ENCODE measurements at regions of chr2 and their contacts with region 1.

Region 1: DNA sequence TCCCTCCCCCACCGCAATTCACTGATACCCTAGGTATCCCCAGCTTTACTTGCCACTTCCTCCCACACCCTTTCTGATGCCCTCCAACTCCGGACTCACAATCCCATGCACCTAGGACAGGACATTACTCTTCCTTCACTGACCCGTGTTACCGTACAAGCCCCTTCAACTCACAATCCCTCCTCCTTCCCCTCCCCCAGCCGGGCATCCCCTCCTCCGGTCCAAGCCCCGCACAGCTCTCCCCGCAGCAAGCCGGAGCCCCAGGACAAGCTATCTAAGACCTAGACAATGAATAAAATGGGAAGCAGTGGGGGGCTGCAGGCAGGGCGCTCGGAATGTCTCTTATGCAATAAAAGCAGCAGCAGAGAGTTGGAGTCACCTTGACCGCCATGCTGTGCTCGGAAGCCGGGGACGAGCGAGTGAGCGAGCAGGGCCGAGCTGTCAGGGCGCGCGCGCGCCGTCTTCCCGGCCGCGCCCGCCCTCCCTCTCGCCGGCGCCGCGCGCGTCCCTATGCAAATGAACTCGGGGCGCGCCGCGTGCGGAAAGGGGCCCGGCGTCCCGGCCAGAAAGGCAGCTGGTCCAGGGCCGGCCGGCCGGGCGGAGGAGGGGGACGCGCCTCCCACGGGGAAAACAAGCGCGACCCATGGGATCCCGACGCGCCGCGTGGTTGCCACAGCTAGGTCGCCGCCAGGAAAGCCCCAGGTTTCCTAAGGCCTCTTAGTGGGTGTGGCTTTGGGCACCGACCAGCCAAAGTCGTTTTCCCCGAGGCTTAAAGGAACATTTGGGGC is at the start of gene SLC25A12:
- DNase-seq: peak; percentile 71
- H3K4me3 Mint-ChIP-seq: peak within 1 kb of the TSS; percentile 98
- H3K27ac Mint-ChIP-seq: peak within 1 kb of the TSS; percentile 90
- H3K4me1 Mint-ChIP-seq: peaks cover 57% of the 10 kb centered on the region
- H3K27me3 Mint-ChIP-seq: peaks cover 7% of the 10 kb centered on the region
- total RNA-seq, gene SLC25A12: 34.6 and 35.0 TPM in 2 replicates

Region 2: DNA sequence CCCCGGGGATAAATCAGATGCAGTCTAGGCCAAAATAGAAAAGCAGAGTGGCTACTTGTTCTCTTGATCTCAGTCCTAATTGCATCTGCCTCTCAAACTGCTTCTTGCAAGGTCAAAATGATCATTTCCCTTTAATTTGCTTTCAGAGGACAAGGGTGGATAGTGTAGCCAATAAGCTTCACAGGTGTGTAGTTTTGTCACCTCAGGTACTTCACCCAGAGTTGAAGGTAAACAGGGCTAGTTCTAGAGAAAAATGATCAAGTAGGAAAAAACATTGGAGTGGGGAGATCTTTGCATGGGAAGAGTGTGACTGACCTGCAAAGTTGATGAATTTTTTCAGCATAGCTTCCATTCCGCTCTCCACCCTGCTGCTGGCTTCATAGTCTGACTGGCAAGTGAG is 1115.1 kb before region 1 on chr2:
- intact Hi-C with region 1: no loop called
- DNase-seq: no peak
- H3K4me3 Mint-ChIP-seq: no peak overlapping the region
- H3K27ac Mint-ChIP-seq: no peak overlapping the region
- H3K4me1 Mint-ChIP-seq: no peaks in the 10 kb centered on the region
- H3K27me3 Mint-ChIP-seq: peaks cover 52% of the 10 kb centered on the region

Region 3: DNA sequence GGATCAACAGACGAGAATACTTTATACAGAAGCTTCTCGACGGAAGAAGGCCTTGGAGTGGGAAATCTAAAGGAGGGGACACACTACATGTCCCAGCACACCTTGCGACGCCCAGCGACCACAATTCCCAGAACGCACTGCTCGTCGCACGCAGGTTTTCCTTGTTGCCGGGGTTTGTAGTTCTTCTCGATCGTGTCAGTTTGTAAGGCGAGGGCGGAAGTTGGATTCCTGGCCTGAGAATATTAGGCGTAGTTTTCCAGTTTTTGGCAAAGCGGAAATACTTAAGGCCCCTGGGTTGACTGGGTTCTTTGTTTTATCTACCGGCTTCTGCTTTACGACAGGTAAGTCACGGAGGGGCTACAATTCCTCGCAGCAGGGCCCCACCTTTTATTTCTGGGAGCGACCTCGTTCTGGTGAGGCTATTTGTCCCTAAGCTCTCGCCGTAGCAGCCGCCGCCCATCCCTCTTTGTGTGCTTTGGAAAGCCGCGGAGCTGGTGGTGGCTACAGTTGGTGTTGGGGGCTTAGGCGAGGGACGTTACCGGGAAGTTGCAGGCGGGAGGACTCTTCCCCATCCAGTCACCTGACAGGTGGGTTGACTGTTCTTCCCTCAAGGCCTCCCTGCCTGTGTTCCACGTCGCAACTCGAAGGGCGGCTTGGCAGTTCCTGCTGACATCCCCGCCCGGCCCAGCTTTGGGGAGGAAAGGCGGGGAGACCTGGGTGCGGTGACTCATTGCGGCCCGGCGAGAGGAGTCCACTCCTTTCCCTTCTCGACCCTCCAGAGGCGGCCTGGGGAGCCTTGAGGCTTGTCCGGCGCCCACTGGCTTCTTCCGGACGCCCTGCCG is 206.5 kb before region 1 on chr2 and contains the start of gene DYNC1I2:
- intact Hi-C with region 1: loop called (anchors 1 kb)
- DNase-seq: peak; percentile 63
- H3K4me3 Mint-ChIP-seq: peak within 1 kb of the TSS; percentile 85
- H3K27ac Mint-ChIP-seq: peak within 1 kb of the TSS; percentile 84
- H3K4me1 Mint-ChIP-seq: peaks cover 20% of the 10 kb centered on the region
- H3K27me3 Mint-ChIP-seq: peaks cover 10% of the 10 kb centered on the region
- total RNA-seq, gene DYNC1I2: 49.3 and 49.4 TPM in 2 replicates

Region 4: GRCh38 chr2:171798252-171798741 is 95.7 kb before region 1 on chr2:
- intact Hi-C with region 1: loop called (anchors 5 kb)
- DNase-seq: no peak
- H3K4me3 Mint-ChIP-seq: no peak overlapping the region
- H3K27ac Mint-ChIP-seq: peak overlapping the region; percentile 52
- H3K4me1 Mint-ChIP-seq: peaks cover 25% of the 10 kb centered on the region
- H3K27me3 Mint-ChIP-seq: no peaks in the 10 kb centered on the region

Region 5: DNA sequence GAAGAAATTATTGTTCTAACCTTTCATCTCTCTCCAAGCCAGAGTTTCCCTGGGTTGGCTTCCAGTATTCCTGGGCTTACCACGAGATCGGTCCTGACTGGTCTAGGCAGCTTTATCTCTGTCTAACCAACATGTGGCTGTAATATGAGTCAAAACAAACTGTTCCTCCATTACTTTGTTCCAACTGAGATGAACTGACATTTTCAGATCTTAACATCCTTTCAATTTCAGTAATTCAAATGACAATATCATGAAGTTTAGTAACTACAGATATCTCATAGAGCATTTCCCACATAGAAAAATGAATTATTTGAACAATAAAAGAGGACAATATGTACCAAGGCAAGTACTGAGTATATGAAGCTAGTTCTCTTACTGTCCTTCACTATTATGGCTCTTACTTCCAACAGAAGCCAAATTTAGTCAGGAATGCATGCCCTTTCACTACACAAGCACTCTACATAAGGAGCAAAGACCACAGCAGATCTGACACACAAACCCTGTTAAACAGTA is 15.5 kb before region 1 on chr2:
- intact Hi-C with region 1: loop called (anchors 1 kb)
- DNase-seq: no peak
- H3K4me3 Mint-ChIP-seq: no peak overlapping the region
- H3K27ac Mint-ChIP-seq: peak overlapping the region; percentile 32
- H3K4me1 Mint-ChIP-seq: peaks cover 43% of the 10 kb centered on the region
- H3K27me3 Mint-ChIP-seq: no peaks in the 10 kb centered on the region

Region 6: GRCh38 chr2:171910494-171910893 is 16.5 kb after region 1 on chr2:
- intact Hi-C with region 1: loop called (anchors 2 kb)
- DNase-seq: no peak
- H3K4me3 Mint-ChIP-seq: no peak overlapping the region
- H3K27ac Mint-ChIP-seq: no peak overlapping the region
- H3K4me1 Mint-ChIP-seq: no peaks in the 10 kb centered on the region
- H3K27me3 Mint-ChIP-seq: peaks cover 10% of the 10 kb centered on the region

Region 7: DNA sequence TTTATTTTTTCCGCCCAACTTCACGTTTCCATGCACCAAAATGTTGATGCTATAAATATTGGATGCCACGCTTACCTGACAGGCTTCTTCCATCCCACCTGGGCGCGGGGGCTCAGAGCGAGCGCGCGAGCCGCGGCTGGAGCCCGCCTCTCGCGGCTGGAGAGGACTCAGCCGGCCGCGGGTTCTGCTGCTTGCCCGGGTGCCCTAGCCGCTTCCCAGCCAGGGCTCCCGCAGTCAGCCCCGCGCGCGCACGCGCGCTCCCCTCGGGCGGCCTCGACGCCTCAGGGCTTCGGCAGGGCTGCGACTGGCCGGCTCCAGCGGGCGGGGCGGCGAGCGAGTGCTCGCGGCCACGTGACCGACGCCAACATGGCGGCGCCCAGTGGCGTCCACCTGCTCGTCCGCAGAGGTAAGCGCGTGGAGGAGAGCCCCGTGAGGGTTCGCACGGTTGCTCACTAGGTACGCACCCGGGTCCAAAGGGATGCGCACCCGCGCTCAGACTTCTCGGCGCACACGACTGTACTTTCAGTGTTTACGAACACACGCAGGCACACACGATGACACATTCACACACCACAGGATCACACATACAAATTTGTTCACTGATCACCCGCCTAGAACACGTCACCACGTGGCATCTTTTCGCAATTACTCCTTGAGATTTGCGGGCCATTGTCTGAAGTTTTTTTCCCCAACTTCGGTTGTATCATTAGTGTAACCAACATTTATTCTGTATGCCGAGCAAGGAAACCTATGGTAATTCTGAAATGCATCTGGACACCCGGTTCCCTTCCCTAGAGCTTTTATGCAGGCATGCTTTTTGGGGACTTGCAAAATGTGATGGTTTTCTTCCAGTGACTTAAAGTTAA is 105.8 kb after region 1 on chr2 and contains the start of gene METAP1D:
- intact Hi-C with region 1: loop called (anchors 1 kb)
- DNase-seq: peak; percentile 88
- H3K4me3 Mint-ChIP-seq: peak within 1 kb of the TSS; percentile 98
- H3K27ac Mint-ChIP-seq: peak within 1 kb of the TSS; percentile 96
- H3K4me1 Mint-ChIP-seq: peaks cover 19% of the 10 kb centered on the region
- H3K27me3 Mint-ChIP-seq: peaks cover 5% of the 10 kb centered on the region
- total RNA-seq, gene METAP1D: 5.4 and 6.4 TPM in 2 replicates

Region 8: DNA sequence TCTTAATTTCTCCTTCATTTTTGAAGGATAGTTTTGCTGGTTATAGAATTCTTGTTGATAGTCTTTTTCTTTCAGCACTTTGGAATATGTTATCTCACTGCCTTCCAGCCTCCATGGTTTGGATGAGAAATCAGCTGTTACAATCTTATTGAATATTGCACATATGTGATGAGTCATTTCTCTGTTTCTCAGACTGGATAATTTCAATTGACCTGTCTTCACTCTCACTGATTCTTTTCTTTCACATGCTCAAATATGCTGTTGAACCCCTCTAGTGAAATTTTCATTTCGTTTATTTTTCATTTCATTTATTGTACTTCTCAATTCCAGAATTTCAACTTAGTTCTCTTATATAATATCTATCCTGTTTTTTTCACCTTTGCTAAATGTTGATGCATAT is 684.0 kb after region 1 on chr2:
- intact Hi-C with region 1: no loop called
- DNase-seq: no peak
- H3K4me3 Mint-ChIP-seq: no peak overlapping the region
- H3K27ac Mint-ChIP-seq: no peak overlapping the region
- H3K4me1 Mint-ChIP-seq: peaks cover 24% of the 10 kb centered on the region
- H3K27me3 Mint-ChIP-seq: no peaks in the 10 kb centered on the region

Measured in activated T-helper 1 cell treated with anti-CD3 and anti-CD28 coated beads, Interleukin-12 subunit alpha, Interleukin-12 subunit beta, Interleukin-2, Interleukin-4 antibody, amounts not matched to agents 30 ng/mL and 10 ng/mL and 1 ng/mL, durations not matched to agents 14 hours and 24 hours and 36 hours (primary cell).